ENCODE measurements at regions of chr6 and their contacts with region 1.

Region 1: DNA sequence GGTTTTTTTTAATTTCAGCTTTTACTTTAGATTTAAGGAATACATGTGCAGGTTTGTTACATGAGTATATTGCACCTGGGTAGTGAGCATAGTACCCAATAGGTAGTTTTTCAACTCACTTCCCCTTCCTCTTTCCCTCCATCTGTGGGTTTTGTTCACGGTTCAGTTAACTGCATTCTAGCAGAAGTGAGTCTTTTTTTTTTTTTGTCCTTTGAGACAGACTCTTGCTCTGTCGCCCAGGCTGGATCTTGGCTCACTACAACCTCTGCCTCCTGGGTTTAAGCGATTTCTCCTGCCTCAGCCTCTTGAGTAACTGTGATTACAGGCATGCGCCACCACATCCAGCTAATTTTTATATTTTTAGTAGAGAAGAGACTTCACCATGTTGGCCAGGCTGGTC is 8.7 kb downstream of the UBR2 start:
- DNase-seq: no peak
- H3K4me3 Mint-ChIP-seq: no peak overlapping the region
- H3K27ac Mint-ChIP-seq: no peak overlapping the region
- H3K4me1 Mint-ChIP-seq: peaks cover 46% of the 10 kb centered on the region
- H3K27me3 Mint-ChIP-seq: no peaks in the 10 kb centered on the region

Region 2: DNA sequence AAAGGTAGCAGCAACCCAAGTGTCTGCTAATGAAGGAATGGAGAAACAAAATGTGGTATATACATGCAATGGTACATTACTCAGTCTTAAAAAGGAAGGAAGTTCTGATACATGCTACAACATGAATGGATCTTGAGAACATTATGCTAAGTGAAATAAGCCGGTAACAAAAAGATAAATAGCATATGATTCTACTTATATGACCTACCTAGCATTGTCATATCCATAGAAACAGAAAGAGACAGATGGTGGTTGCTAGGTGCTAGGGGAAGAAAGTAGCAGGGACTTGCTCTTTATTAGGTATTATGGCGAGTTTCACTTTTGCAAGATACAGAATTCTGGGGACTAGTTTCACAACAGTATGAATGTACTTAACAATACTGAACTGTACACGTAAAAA is 37.9 kb after region 1 on chr6:
- intact Hi-C with region 1: loop called (anchors 1 kb)
- DNase-seq: no peak
- H3K4me3 Mint-ChIP-seq: no peak overlapping the region
- H3K27ac Mint-ChIP-seq: peak overlapping the region; percentile 11
- H3K4me1 Mint-ChIP-seq: peaks cover 18% of the 10 kb centered on the region
- H3K27me3 Mint-ChIP-seq: no peaks in the 10 kb centered on the region

Region 3: DNA sequence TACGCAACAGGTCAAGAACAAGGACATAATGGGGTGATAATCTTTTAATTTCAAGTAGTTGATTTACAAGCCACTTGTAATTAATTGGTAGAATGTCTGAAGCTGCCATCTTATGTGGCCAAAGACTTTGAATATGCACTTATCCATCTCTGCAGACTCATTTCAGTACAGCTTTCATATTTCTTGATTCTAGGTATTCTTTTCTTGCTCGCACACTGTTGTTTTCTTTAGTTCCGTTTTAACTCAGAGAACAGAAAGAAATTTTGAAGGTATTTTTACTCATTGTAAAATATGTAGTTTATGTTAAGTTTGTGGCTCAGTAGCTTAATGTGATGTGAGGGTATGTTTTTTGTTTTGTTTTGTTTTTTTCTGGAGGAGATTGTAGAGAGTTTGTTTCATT is 65.2 kb after region 1 on chr6:
- intact Hi-C with region 1: loop called (anchors 5 kb)
- DNase-seq: no peak
- H3K4me3 Mint-ChIP-seq: no peak overlapping the region
- H3K27ac Mint-ChIP-seq: peak overlapping the region; percentile 4
- H3K4me1 Mint-ChIP-seq: peaks cover 23% of the 10 kb centered on the region
- H3K27me3 Mint-ChIP-seq: no peaks in the 10 kb centered on the region

Region 4: DNA sequence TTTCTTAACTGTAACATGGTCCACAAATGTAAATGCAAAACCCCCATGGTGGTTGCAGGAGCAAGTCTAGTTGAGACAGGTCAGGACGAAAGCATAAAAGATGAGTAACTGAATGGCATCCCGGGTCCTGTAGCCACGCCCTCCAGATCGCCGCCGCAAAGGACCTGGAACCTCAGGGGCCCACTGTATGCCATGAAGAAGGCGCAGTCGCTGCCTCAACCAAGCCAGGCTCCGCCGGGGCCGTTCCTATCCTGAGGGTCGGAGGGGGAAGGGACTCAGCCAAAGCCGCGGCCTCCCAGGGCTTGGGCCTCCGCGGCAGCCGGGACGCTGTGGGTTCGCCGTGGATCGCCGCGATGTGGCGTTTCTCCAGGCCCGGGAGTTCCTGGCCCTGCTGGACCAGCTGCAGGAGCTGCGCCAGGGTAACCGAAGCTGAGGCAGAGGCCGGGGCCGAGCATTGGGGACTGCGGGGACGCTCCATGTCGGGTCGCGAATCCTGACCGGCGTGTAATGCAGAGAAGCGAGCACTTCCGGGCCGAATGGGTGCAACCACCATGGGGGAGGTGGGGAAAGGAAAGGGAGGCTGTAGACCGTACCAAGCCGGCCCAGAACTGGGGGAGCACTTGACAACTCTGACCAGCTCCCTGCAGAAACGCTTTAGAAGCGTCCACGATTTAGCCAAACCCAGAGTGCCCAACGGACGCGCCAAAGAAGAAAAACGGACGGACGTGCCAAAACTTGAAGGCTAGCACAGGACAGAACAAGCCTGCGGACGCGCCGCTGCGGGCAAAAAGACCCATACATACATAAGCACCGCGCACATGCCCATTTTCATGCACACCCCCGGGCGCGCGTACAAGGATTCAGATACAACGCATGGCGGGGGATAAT is 318.0 kb after region 1 on chr6:
- intact Hi-C with region 1: loop called (anchors 5 kb)
- DNase-seq: peak; percentile 86
- H3K4me3 Mint-ChIP-seq: peak overlapping the region; percentile 84
- H3K27ac Mint-ChIP-seq: peak overlapping the region; percentile 89
- H3K4me1 Mint-ChIP-seq: peaks cover 12% of the 10 kb centered on the region
- H3K27me3 Mint-ChIP-seq: no peaks in the 10 kb centered on the region

Measured in activated T-helper 1 cell treated with anti-CD3 and anti-CD28 coated beads, Interleukin-12 subunit alpha, Interleukin-12 subunit beta, Interleukin-2, Interleukin-4 antibody, amounts not matched to agents 30 ng/mL and 10 ng/mL and 1 ng/mL, durations not matched to agents 14 hours and 24 hours and 36 hours (primary cell).